CD4-positive, alpha-beta memory T cell (primary cell): ENCODE measurements at regions of chr7 and their contacts with region 1.

Region 1: GRCh38 chr7:50359995-50360925 is 55.7 kb downstream of the IKZF1 start:
- DNase-seq: peak; percentile 84 to 94 (median 88)
- H3K4me3 ChIP-seq: peak overlapping the region; percentile 1 to 25
- H3K4me3 Mint-ChIP-seq: peak overlapping the region; percentile 70 to 87 (median 78)
- H3K27ac ChIP-seq: peak overlapping the region; percentile 89
- H3K27ac Mint-ChIP-seq: peak overlapping the region in 6 of 7 donors; percentile 98 to 100 (median 99)
- H3K4me1 ChIP-seq: peaks cover 99% of the 10 kb centered on the region
- H3K4me1 Mint-ChIP-seq: peaks cover 87 to 99% (median 95%) of the 10 kb centered on the region in 4 donors
- H3K27me3 ChIP-seq: no peaks in the 10 kb centered on the region
- H3K27me3 Mint-ChIP-seq: no peaks in the 10 kb centered on the region

Region 2: DNA sequence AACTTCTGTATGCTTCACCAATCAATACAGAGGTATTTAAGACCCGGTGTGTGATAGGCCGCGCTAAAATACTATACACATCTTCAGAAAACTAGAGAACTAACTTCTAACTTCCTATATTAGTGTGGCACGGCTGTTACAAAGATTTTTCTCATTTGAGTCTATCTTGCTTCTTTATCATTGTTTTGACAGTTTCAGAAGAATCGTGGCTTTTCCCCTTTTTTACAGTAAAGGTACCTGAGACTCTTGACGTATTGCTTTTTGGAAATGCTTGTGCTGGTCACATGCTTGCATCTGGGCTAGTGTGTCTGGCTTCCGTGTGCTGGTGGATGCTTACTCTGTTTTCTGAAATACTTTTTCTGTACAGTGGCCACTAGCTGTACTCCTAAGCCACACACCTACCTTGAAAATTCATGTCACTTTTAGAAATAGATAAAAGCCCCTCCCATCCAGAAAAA is 43.0 kb before region 1 on chr7:
- CTCF ChIA-PET with region 1: interaction called, 336 read pairs
- POLR2A ChIA-PET with region 1: interaction called, 2,673 read pairs
- intact Hi-C with region 1: loop called (anchors 2 kb)
- DNase-seq: peak; percentile 78 to 89 (median 84)
- H3K4me3 ChIP-seq: peak overlapping the region in 1 of 2 donors; percentile 53
- H3K4me3 Mint-ChIP-seq: peak overlapping the region; percentile 78 to 100 (median 92)
- H3K27ac ChIP-seq: peak overlapping the region; percentile 90
- H3K27ac Mint-ChIP-seq: peak overlapping the region in 6 of 7 donors; percentile 93 to 99 (median 98)
- H3K4me1 ChIP-seq: peaks cover 99% of the 10 kb centered on the region
- H3K4me1 Mint-ChIP-seq: peaks cover 73 to 100% (median 86%) of the 10 kb centered on the region in 4 donors
- H3K27me3 ChIP-seq: no peaks in the 10 kb centered on the region
- H3K27me3 Mint-ChIP-seq: no peaks in the 10 kb centered on the region

Region 3: GRCh38 chr7:50335795-50336754 is 24.2 kb before region 1 on chr7:
- CTCF ChIA-PET with region 1: interaction called, 142 read pairs
- POLR2A ChIA-PET with region 1: interaction called, 2,673 read pairs
- intact Hi-C with region 1: loop called (anchors 1 kb)
- DNase-seq: peak; percentile 66 to 95 (median 70)
- H3K4me3 ChIP-seq: peak overlapping the region in 1 of 2 donors; percentile 23
- H3K4me3 Mint-ChIP-seq: peak overlapping the region in 1 of 8 donors; percentile 53
- H3K27ac ChIP-seq: peak overlapping the region; percentile 96
- H3K27ac Mint-ChIP-seq: no peak overlapping the region
- H3K4me1 ChIP-seq: peaks cover 100% of the 10 kb centered on the region
- H3K4me1 Mint-ChIP-seq: peaks cover 0 to 63% (median 39%) of the 10 kb centered on the region in 4 donors
- H3K27me3 ChIP-seq: no peaks in the 10 kb centered on the region
- H3K27me3 Mint-ChIP-seq: no peaks in the 10 kb centered on the region

Region 4: GRCh38 chr7:50349963-50350944 is 10.0 kb before region 1 on chr7:
- CTCF ChIA-PET with region 1: interaction called, 68 read pairs
- POLR2A ChIA-PET with region 1: interaction called, 1,029 read pairs
- intact Hi-C with region 1: loop called (anchors 1 kb)
- DNase-seq: peak; percentile 46 to 89 (median 52)
- H3K4me3 ChIP-seq: peak overlapping the region in 1 of 2 donors; percentile 29
- H3K4me3 Mint-ChIP-seq: peak overlapping the region; percentile 69 to 88 (median 78)
- H3K27ac ChIP-seq: peak overlapping the region; percentile 96
- H3K27ac Mint-ChIP-seq: peak overlapping the region in 6 of 7 donors; percentile 97 to 100 (median 98)
- H3K4me1 ChIP-seq: peaks cover 100% of the 10 kb centered on the region
- H3K4me1 Mint-ChIP-seq: peaks cover 79 to 98% (median 92%) of the 10 kb centered on the region in 4 donors
- H3K27me3 ChIP-seq: no peaks in the 10 kb centered on the region
- H3K27me3 Mint-ChIP-seq: no peaks in the 10 kb centered on the region

Region 5: GRCh38 chr7:50467817-50468610 is 107.8 kb after region 1 on chr7:
- CTCF ChIA-PET with region 1: no interaction called
- POLR2A ChIA-PET with region 1: no interaction called
- intact Hi-C with region 1: no loop called
- DNase-seq: peak; percentile 72 to 78 (median 74)
- H3K4me3 ChIP-seq: peak overlapping the region in 1 of 2 donors; percentile 6
- H3K4me3 Mint-ChIP-seq: peak overlapping the region; percentile 18 to 79 (median 64)
- H3K27ac ChIP-seq: no peak overlapping the region
- H3K27ac Mint-ChIP-seq: peak overlapping the region in 5 of 7 donors; percentile 55 to 88 (median 81)
- H3K4me1 ChIP-seq: peaks cover 10% of the 10 kb centered on the region
- H3K4me1 Mint-ChIP-seq: peaks cover 2 to 14% (median 9%) of the 10 kb centered on the region in 4 donors
- H3K27me3 ChIP-seq: no peaks in the 10 kb centered on the region
- H3K27me3 Mint-ChIP-seq: peaks cover 0 to 3% of the 10 kb centered on the region in 2 donors

Region 6: GRCh38 chr7:50610521-50611277 is 250.4 kb after region 1 on chr7:
- CTCF ChIA-PET with region 1: no interaction called
- POLR2A ChIA-PET with region 1: no interaction called
- intact Hi-C with region 1: no loop called
- DNase-seq: peak; percentile 61 to 79 (median 74)
- H3K4me3 ChIP-seq: peak overlapping the region in 1 of 2 donors; percentile 9
- H3K4me3 Mint-ChIP-seq: peak overlapping the region in 7 of 8 donors; percentile 17 to 76 (median 63)
- H3K27ac ChIP-seq: peak overlapping the region; percentile 31
- H3K27ac Mint-ChIP-seq: peak overlapping the region; percentile 54 to 94 (median 86)
- H3K4me1 ChIP-seq: peaks cover 48% of the 10 kb centered on the region
- H3K4me1 Mint-ChIP-seq: peaks cover 34 to 54% (median 45%) of the 10 kb centered on the region in 4 donors
- H3K27me3 ChIP-seq: no peaks in the 10 kb centered on the region
- H3K27me3 Mint-ChIP-seq: no peaks in the 10 kb centered on the region